ENCODE measurements at regions of chr5 and their contacts with region 1.

Region 1: GRCh38 chr5:142192286-142193113 is 83.9 kb downstream of the NDFIP1 start:
- DNase-seq: peak; percentile 43
- ATAC-seq: peak; percentile 58
- H3K4me3 ChIP-seq: no peak overlapping the region
- H3K27ac ChIP-seq: peak overlapping the region; percentile 93
- H3K4me1 ChIP-seq: peaks cover 8% of the 10 kb centered on the region
- H3K27me3 ChIP-seq: no peaks in the 10 kb centered on the region
- CTCF ChIP-seq: no peak

Region 2: GRCh38 chr5:141846031-141846430 is 346.5 kb before region 1 on chr5:
- CTCF ChIA-PET with region 1: no interaction called
- POLR2A ChIA-PET with region 1: no interaction called
- intact Hi-C with region 1: no loop called
- DNase-seq: no peak
- ATAC-seq: no peak
- H3K4me3 ChIP-seq: no peak overlapping the region
- H3K27ac ChIP-seq: no peak overlapping the region
- H3K4me1 ChIP-seq: peaks cover 34% of the 10 kb centered on the region
- H3K27me3 ChIP-seq: no peaks in the 10 kb centered on the region
- CTCF ChIP-seq: no peak

Region 3: GRCh38 chr5:142215915-142216681 is 23.6 kb after region 1 on chr5:
- CTCF ChIA-PET with region 1: interaction called, 4 read pairs
- POLR2A ChIA-PET with region 1: interaction called, 8 read pairs
- intact Hi-C with region 1: loop called (anchors 1 kb)
- DNase-seq: peak; percentile 97
- ATAC-seq: peak; percentile 95
- H3K4me3 ChIP-seq: peak overlapping the region; percentile 43; the same call in 1 of the 2 replicates
- H3K27ac ChIP-seq: peak overlapping the region; percentile 91
- H3K4me1 ChIP-seq: peaks cover 38% of the 10 kb centered on the region
- H3K27me3 ChIP-seq: no peaks in the 10 kb centered on the region
- CTCF ChIP-seq: no peak

Region 4: GRCh38 chr5:142246258-142246657 is 53.8 kb after region 1 on chr5:
- CTCF ChIA-PET with region 1: no interaction called
- POLR2A ChIA-PET with region 1: interaction called, 3 read pairs
- intact Hi-C with region 1: loop called (anchors 1 kb)
- DNase-seq: peak; percentile 32
- ATAC-seq: peak; percentile 57
- H3K4me3 ChIP-seq: no peak overlapping the region
- H3K27ac ChIP-seq: no peak overlapping the region
- H3K4me1 ChIP-seq: peaks cover 34% of the 10 kb centered on the region
- H3K27me3 ChIP-seq: no peaks in the 10 kb centered on the region
- CTCF ChIP-seq: no peak

Region 5: GRCh38 chr5:142307146-142307890 is 114.8 kb after region 1 on chr5:
- CTCF ChIA-PET with region 1: no interaction called
- POLR2A ChIA-PET with region 1: no interaction called
- intact Hi-C with region 1: loop called (anchors 1 kb)
- DNase-seq: no peak
- ATAC-seq: peak; percentile 6
- H3K4me3 ChIP-seq: no peak overlapping the region
- H3K27ac ChIP-seq: 0 out of 2 replicates have a peak overlapping the region, but pooled peaks have one; percentile 9
- H3K4me1 ChIP-seq: no peaks in the 10 kb centered on the region
- H3K27me3 ChIP-seq: no peaks in the 10 kb centered on the region
- CTCF ChIP-seq: no peak

Measured in PC-3 (cell line).